Activated CD4-positive, alpha-beta T cell treated with anti-CD3 and anti-CD28 coated beads, Interleukin-2, amount 10 ng/mL, durations not matched to agents 7 days and 5 days (primary cell): ENCODE measurements at regions of chr6 and their contacts with region 1.

Region 1: GRCh38 chr6:3848925-3849605 is at the start of gene FAM50B:
- DNase-seq: peak; percentile 91
- H3K4me3 Mint-ChIP-seq: peak within 1 kb of the TSS; percentile 73
- H3K27ac Mint-ChIP-seq: peak within 1 kb of the TSS; percentile 91
- H3K4me1 Mint-ChIP-seq: peaks cover 24% of the 10 kb centered on the region
- H3K27me3 Mint-ChIP-seq: no peaks in the 10 kb centered on the region
- total RNA-seq, gene FAM50B: 12.0 to 12.7 TPM

Region 2: DNA sequence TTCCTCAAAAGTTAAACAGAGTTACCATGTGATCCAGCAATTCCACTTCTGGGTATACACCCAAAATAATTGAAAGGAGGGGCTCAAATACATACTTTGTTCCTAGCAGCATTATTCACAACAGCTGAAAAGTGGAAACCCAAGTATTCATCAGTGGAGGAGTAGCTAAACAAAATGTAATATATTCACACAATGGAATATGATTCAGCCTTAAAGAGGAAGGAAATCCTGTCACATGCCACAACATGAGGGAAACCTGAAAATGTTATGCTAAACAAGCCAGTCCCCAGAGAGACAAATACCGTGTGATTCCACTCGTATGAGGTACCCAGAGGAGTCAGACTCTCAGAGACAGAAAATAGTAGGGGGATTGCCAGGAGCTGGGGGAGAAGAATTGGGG is 142.0 kb before region 1 on chr6:
- CTCF ChIA-PET with region 1: no interaction called
- POLR2A ChIA-PET with region 1: no interaction called
- DNase-seq: no peak
- H3K4me3 Mint-ChIP-seq: no peak overlapping the region
- H3K27ac Mint-ChIP-seq: no peak overlapping the region
- H3K4me1 Mint-ChIP-seq: no peaks in the 10 kb centered on the region
- H3K27me3 Mint-ChIP-seq: no peaks in the 10 kb centered on the region

Region 3: GRCh38 chr6:3831761-3832530 is 17.1 kb before region 1 on chr6:
- CTCF ChIA-PET with region 1: interaction called, 11 read pairs
- POLR2A ChIA-PET with region 1: no interaction called
- DNase-seq: no peak
- H3K4me3 Mint-ChIP-seq: no peak overlapping the region
- H3K27ac Mint-ChIP-seq: no peak overlapping the region
- H3K4me1 Mint-ChIP-seq: no peaks in the 10 kb centered on the region
- H3K27me3 Mint-ChIP-seq: no peaks in the 10 kb centered on the region

Region 4: GRCh38 chr6:3861424-3861823 is 12.4 kb after region 1 on chr6:
- CTCF ChIA-PET with region 1: interaction called, 33 read pairs
- POLR2A ChIA-PET with region 1: no interaction called
- DNase-seq: no peak
- H3K4me3 Mint-ChIP-seq: no peak overlapping the region
- H3K27ac Mint-ChIP-seq: no peak overlapping the region
- H3K4me1 Mint-ChIP-seq: no peaks in the 10 kb centered on the region
- H3K27me3 Mint-ChIP-seq: peaks cover 22% of the 10 kb centered on the region

Region 5: DNA sequence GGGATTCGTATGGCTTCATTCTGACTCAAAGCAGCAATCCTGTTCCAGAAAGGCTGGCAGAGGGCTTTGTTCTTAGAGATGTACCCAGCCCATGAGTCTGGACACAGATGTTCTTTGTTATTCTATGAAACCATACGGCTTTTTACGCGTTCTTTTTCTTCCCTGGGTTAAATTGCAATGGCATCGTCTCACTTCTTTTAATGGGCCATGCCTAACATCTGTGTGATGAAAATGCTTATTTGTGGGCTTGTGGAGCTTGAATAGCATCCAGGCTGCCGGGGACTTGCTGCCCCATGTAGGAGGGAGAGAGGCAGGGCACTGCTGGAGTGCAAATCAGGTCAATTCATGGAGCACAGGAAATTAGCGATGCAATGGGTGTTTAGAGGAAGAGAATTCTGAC is 19.5 kb after region 1 on chr6:
- CTCF ChIA-PET with region 1: interaction called, 33 read pairs
- POLR2A ChIA-PET with region 1: no interaction called
- DNase-seq: no peak
- H3K4me3 Mint-ChIP-seq: no peak overlapping the region
- H3K27ac Mint-ChIP-seq: peak overlapping the region; percentile 67
- H3K4me1 Mint-ChIP-seq: peaks cover 24% of the 10 kb centered on the region
- H3K27me3 Mint-ChIP-seq: peaks cover 6% of the 10 kb centered on the region

Region 6: GRCh38 chr6:3929281-3929798 is 80.3 kb after region 1 on chr6:
- CTCF ChIA-PET with region 1: interaction called, 10 read pairs
- POLR2A ChIA-PET with region 1: no interaction called
- DNase-seq: no peak
- H3K4me3 Mint-ChIP-seq: no peak overlapping the region
- H3K27ac Mint-ChIP-seq: no peak overlapping the region
- H3K4me1 Mint-ChIP-seq: no peaks in the 10 kb centered on the region
- H3K27me3 Mint-ChIP-seq: peaks cover 6% of the 10 kb centered on the region